ENCODE measurements at regions of chr10 and their contacts with region 1.

Region 1: DNA sequence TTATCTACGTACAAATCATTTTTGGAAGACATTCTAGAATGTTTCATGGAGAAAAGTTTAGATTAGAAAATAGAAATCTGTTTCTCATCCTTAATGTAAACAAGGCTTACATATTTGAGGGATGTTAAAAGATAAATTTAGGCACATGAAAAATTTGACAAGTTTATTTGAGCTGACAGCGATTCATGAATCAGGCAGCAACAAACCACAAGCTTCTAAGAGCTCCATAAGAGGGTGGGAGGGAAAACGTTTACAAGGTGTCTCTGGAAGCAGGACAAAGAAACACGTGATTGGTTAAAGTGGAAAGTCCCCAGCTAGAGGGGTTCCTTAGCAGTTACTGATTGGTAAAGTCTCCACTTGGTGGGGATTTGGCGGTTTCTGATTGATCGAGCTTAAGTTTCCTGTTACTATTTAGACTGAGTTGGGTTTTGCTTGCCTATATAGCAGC is 228.9 kb upstream of the PITRM1 start:
- DNase-seq: no peak
- H3K4me3 ChIP-seq: no peak overlapping the region
- H3K27ac ChIP-seq: no peak overlapping the region
- H3K4me1 ChIP-seq: peaks cover 24% of the 10 kb centered on the region
- H3K27me3 ChIP-seq: no peaks in the 10 kb centered on the region
- CTCF ChIP-seq: no peak
- POLR2A ChIP-seq: no peak

Region 2: DNA sequence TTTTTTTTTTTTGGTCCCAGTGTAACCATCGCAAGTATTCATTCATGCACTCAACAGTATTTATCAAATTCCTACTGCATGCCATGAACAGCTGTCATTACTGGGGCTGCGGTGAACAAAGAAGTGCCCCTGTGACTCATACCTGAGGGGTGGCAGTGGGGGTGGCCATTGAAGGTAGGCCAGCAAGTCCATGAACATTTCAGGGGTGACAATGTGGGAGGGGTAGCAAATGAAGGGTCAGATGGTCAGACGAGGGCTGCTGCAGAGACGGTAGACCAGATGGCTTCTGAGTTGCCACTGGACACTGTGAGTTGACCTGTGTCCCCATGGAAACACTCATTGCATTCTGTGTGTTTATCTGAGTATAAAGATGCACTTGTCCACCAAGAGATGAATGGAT is 136.4 kb before region 1 on chr10:
- CTCF ChIA-PET with region 1: no interaction called
- POLR2A ChIA-PET with region 1: no interaction called
- dilution Hi-C with region 1: no loop called
- intact Hi-C with region 1: loop called (anchors 2 kb)
- DNase-seq: peak; percentile 26
- H3K4me3 ChIP-seq: no peak overlapping the region
- H3K27ac ChIP-seq: peak overlapping the region; percentile 82
- H3K4me1 ChIP-seq: peaks cover 39% of the 10 kb centered on the region
- H3K27me3 ChIP-seq: no peaks in the 10 kb centered on the region
- CTCF ChIP-seq: no peak
- POLR2A ChIP-seq: no peak

Region 3: GRCh38 chr10:3319811-3320226 is 81.7 kb before region 1 on chr10:
- CTCF ChIA-PET with region 1: no interaction called
- POLR2A ChIA-PET with region 1: no interaction called
- dilution Hi-C with region 1: no loop called
- intact Hi-C with region 1: no loop called
- DNase-seq: no peak
- H3K4me3 ChIP-seq: no peak overlapping the region
- H3K27ac ChIP-seq: no peak overlapping the region
- H3K4me1 ChIP-seq: no peaks in the 10 kb centered on the region
- H3K27me3 ChIP-seq: no peaks in the 10 kb centered on the region
- CTCF ChIP-seq: no peak
- POLR2A ChIP-seq: no peak

Region 4: GRCh38 chr10:3424110-3424851 is 22.8 kb after region 1 on chr10:
- CTCF ChIA-PET with region 1: no interaction called
- POLR2A ChIA-PET with region 1: no interaction called
- dilution Hi-C with region 1: no loop called
- intact Hi-C with region 1: loop called (anchors 2 kb)
- DNase-seq: peak; percentile 45
- H3K4me3 ChIP-seq: no peak overlapping the region
- H3K27ac ChIP-seq: peak overlapping the region; percentile 72
- H3K4me1 ChIP-seq: peaks cover 38% of the 10 kb centered on the region
- H3K27me3 ChIP-seq: no peaks in the 10 kb centered on the region
- CTCF ChIP-seq: no peak
- POLR2A ChIP-seq: no peak

Region 5: GRCh38 chr10:3435671-3436070 is 34.2 kb after region 1 on chr10:
- CTCF ChIA-PET with region 1: no interaction called
- POLR2A ChIA-PET with region 1: no interaction called
- dilution Hi-C with region 1: no loop called
- intact Hi-C with region 1: loop called (anchors 2 kb)
- DNase-seq: peak; percentile 93
- H3K4me3 ChIP-seq: no peak overlapping the region
- H3K27ac ChIP-seq: peak overlapping the region; percentile 19
- H3K4me1 ChIP-seq: peaks cover 13% of the 10 kb centered on the region
- H3K27me3 ChIP-seq: no peaks in the 10 kb centered on the region
- CTCF ChIP-seq: no peak
- POLR2A ChIP-seq: no peak

Measured in endothelial cell of umbilical vein (primary cell).